ENCODE measurements at regions of chr2 and their contacts with region 1.

Region 1: GRCh38 chr2:158456309-158457066 is at the starts of genes CCDC148 and PKP4:
- DNase-seq: peak; percentile 83
- H3K4me3 Mint-ChIP-seq: peak within 1 kb of the TSS; percentile 94
- H3K27ac Mint-ChIP-seq: peak within 1 kb of the TSS; percentile 86
- H3K4me1 Mint-ChIP-seq: peaks cover 22% of the 10 kb centered on the region
- H3K27me3 Mint-ChIP-seq: peaks cover 38% of the 10 kb centered on the region
- total RNA-seq, gene CCDC148: not detected in 2 replicates
- total RNA-seq, gene PKP4: 26.9 and 27.0 TPM in 2 replicates

Region 2: DNA sequence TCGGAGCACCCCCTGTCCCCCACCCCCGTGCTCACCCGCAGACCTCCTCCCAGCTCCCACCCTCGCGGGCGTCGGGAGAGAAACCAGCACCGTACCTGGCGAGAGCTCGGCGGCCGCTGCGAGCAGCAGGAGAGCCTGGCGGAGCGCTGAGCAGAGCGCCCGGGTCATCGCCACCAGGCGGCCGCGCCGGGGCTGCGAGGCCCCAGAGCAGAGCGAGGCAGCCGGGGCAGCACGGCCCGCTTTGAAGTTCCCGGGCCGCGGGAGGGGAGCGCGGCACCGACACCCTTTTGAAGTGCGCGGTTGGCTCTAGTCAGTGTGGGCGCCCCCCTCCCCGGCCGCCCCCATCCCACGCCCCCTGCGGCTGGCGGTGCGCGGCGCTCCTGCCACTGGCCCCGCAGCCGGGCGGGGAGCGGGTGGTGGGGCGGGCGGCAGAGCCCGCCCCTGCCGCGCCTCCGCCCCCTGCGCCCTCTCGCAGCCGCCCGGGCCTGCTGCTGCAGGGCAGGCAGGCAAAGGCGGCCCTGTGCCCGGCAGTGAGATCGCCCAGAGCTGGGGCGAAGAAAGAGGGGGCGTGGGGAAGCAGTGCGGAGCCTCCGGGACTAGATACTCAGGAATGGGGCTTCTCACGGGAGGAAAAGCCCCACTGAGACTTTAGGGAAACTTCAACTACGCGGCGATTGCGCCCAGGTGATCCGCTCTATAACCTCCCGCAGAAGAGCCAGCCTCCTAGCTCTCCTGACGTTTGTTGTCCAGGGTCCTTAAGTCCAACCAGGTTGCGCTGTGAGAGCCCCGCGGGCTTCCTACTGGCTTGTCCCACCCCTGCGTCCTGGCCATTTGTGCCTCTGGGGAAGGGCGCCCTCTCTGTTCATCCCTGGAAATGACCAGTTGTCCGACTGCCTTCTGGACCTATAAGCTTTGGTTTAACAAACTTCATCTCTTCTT is 827.7 kb before region 1 on chr2 and contains the start of gene ACVR1C:
- intact Hi-C with region 1: loop called (anchors 5 kb)
- DNase-seq: peak; percentile 65
- H3K4me3 Mint-ChIP-seq: peak within 1 kb of the TSS; percentile 83
- H3K27ac Mint-ChIP-seq: no peak within 1 kb of the TSS
- H3K4me1 Mint-ChIP-seq: peaks cover 22% of the 10 kb centered on the region
- H3K27me3 Mint-ChIP-seq: peaks cover 15% of the 10 kb centered on the region
- total RNA-seq, gene ACVR1C: 0.57 and 0.94 TPM in 2 replicates

Region 3: DNA sequence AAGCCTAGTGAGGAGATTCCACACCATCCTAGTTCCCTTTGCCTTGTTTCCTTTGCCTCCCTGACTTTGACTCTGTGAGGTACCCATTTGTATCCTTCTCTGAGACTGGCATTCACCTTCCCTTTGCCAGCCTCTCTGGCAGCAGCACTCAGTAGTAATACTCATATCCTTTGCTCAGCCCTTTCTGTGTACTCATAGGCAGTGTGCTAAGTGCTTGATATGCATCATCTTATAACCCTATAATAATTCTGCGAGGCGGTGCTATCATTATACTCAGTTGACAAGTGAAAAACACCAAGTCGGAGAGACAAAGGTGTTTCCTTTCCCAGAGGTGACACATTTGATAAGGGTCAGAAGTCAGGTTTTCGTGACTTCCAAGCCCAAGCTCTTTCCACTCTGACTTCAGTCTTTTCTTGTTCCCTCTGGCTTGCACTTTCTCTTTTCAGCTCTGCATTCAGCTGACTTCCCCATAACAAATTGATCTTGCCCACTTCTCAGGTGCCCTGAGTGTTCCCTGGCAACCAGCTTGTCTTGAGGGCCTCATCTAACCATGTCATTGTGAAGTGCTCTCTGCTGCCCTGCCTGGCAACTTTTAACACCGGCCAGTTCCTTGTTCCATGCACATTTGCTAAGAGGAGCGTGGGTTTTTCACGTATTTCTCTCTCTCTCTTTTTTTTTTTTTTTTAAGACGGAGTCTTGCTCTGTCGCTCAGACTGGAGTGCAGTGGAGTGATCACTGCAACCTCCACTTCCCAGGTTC is 449.3 kb before region 1 on chr2:
- intact Hi-C with region 1: loop called (anchors 10 kb)
- DNase-seq: no peak
- H3K4me3 Mint-ChIP-seq: no peak overlapping the region
- H3K27ac Mint-ChIP-seq: no peak overlapping the region
- H3K4me1 Mint-ChIP-seq: peaks cover 15% of the 10 kb centered on the region
- H3K27me3 Mint-ChIP-seq: no peaks in the 10 kb centered on the region

Region 4: GRCh38 chr2:158359839-158360238 is 96.6 kb before region 1 on chr2:
- intact Hi-C with region 1: no loop called
- DNase-seq: no peak
- H3K4me3 Mint-ChIP-seq: no peak overlapping the region
- H3K27ac Mint-ChIP-seq: no peak overlapping the region
- H3K4me1 Mint-ChIP-seq: no peaks in the 10 kb centered on the region
- H3K27me3 Mint-ChIP-seq: no peaks in the 10 kb centered on the region

Region 5: DNA sequence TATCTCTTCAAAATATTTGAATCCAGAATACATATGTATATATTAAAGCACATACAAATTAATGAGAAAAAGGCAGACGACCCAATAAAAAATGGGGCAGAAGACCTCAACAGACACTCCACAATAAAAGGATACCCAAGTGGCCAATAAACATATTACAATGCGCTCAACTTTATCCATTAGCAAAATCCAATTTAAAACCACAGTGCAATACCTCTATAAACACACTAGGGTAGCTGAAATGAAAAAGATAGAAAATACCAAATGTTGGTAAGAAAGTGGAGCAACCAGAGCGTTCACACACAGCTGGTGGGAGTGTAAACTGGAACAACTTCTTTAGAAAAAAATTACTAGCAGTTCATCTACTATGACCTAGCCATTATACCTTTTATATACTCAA is 75.3 kb before region 1 on chr2:
- intact Hi-C with region 1: no loop called
- DNase-seq: no peak
- H3K4me3 Mint-ChIP-seq: no peak overlapping the region
- H3K27ac Mint-ChIP-seq: no peak overlapping the region
- H3K4me1 Mint-ChIP-seq: no peaks in the 10 kb centered on the region
- H3K27me3 Mint-ChIP-seq: no peaks in the 10 kb centered on the region

Region 6: DNA sequence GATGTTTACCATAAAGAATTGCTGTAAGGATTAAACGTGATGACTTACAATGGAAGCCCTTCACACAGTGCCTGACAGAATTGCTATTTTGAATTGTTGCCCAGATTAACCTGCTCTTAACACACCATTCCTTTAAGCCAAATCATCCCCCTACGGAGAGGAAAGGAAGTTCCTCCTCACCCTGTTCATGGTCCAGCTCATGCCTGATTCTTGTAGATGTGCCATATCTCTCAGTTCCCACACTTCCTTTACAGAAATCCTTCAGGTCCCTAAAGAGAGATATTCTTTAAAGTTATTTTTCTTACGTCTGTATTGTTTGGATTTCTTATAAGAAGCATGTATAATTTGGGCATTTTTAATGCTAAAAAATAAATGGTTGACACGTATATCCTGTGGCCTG is 211.1 kb after region 1 on chr2:
- intact Hi-C with region 1: no loop called
- DNase-seq: no peak
- H3K4me3 Mint-ChIP-seq: no peak overlapping the region
- H3K27ac Mint-ChIP-seq: no peak overlapping the region
- H3K4me1 Mint-ChIP-seq: peaks cover 4% of the 10 kb centered on the region
- H3K27me3 Mint-ChIP-seq: no peaks in the 10 kb centered on the region

Region 7: GRCh38 chr2:158701101-158701500 is 244.6 kb after region 1 on chr2:
- intact Hi-C with region 1: no loop called
- DNase-seq: no peak
- H3K4me3 Mint-ChIP-seq: no peak overlapping the region
- H3K27ac Mint-ChIP-seq: no peak overlapping the region
- H3K4me1 Mint-ChIP-seq: no peaks in the 10 kb centered on the region
- H3K27me3 Mint-ChIP-seq: peaks cover 9% of the 10 kb centered on the region

Region 8: DNA sequence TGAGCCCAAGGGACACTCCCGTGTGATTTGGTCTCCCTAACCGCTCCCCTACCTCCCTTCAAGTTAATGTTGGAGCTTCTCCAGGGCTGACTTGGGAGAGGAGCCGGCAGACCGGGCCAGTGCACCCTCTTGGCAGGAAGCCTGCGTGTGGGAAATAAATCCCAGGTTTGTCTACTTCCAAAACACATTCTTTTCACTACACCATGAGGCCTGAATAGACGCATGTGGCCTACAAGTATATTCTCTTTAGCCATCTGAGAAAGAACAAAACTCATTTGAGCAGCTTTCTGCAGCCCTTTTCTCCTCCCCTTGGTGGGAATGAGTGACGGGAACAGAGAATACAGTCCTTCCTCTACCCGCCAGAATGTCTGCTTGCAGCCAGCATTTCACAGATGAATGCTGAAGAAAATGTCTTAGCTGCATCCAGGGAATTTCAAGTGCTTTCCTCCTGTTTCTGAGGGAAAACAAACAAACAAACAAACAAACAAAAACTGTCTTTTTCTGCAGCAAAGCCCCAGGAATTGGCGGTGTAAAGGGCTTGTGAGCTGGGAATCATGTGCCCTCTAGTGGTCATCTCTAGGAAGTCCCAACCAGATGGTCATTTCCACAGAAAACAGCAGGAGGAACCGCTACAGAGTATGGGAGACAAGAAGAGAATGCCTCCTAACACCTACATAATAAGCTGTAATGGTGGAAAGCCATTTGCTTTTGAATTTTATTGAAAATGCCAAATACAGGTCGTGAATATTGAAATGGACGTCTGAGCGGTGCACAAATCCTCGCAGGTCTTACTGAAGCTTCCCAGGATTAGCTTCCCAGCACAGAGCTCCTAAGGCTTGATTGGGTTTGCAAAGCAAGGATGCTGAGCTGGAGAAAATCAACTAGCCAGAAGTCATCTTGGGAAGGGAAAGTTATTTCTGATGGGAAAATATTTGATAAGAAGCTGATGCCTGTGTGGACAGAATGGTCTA is 297.4 kb after region 1 on chr2:
- intact Hi-C with region 1: loop called (anchors 10 kb)
- DNase-seq: peak; percentile 11
- H3K4me3 Mint-ChIP-seq: no peak overlapping the region
- H3K27ac Mint-ChIP-seq: no peak overlapping the region
- H3K4me1 Mint-ChIP-seq: no peaks in the 10 kb centered on the region
- H3K27me3 Mint-ChIP-seq: peaks cover 10% of the 10 kb centered on the region

Region 9: DNA sequence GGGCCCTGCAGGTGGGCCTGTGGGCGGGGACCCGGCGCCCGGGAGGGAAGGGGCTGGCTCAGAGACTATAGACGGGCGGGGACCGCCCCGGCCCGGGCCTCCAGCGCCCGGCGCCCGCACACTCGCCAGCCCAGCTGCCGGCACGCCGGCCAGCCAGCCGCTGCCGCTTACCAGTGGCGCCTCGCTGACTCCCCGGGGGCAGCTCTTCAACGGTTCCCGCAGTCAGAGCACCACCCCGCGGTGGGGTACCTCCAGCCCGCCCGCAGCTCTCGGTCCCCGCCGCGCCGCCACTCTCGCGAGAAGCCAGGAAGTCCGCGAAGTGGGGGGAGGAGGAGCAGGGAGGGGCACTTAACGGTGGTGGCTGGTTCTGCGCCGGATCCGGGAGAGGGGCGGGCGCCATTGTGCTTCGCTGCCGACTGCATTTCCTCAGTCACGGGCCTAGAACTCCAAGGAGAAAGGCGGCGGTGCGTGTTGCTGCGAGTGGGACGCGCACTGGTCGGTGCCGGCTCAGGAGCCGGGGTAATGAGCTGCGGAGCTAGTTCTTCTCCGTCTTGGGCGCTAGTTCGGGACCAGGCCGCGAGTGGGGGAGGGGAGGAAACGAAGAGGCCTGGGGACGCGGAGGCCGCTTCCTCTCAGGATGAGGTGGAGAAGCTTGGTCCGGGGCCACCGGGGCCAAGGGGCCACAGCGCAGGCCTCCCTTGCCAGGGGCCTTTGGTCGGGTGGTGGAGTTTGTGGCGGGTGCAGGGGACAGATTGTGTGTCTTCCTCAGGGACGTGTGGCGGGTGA is 1255.8 kb after region 1 on chr2 and contains the start of gene MARCHF7:
- intact Hi-C with region 1: loop called (anchors 5 kb)
- DNase-seq: peak; percentile 97
- H3K4me3 Mint-ChIP-seq: peak within 1 kb of the TSS; percentile 99
- H3K27ac Mint-ChIP-seq: peak within 1 kb of the TSS; percentile 99
- H3K4me1 Mint-ChIP-seq: peaks cover 36% of the 10 kb centered on the region
- H3K27me3 Mint-ChIP-seq: no peaks in the 10 kb centered on the region
- total RNA-seq, gene MARCHF7: 80.0 and 83.1 TPM in 2 replicates

Measured in activated T-helper 2 cell treated with anti-CD3 and anti-CD28 coated beads, Interferon-gamma antibody, Interleukin-2, Interleukin-4, amounts not matched to agents 10 μg/mL and 5 μg/mL and 100 μg/mL, durations not matched to agents 14 hours and 24 hours and 36 hours (primary cell).